ENCODE measurements at regions of chr6 and their contacts with region 1.

Region 1: GRCh38 chr6:52995913-52996645 is 995 bp upstream of the GSTA4 start:
- DNase-seq: peak; percentile 51
- H3K4me3 Mint-ChIP-seq: peak overlapping the region; percentile 89
- H3K27ac Mint-ChIP-seq: peak overlapping the region; percentile 99
- H3K4me1 Mint-ChIP-seq: peaks cover 40% of the 10 kb centered on the region
- H3K27me3 Mint-ChIP-seq: peaks cover 15% of the 10 kb centered on the region

Region 2: GRCh38 chr6:52984247-52984646 is 11.8 kb before region 1 on chr6:
- CTCF ChIA-PET with region 1: interaction called, 42 read pairs
- POLR2A ChIA-PET with region 1: interaction called, 70 read pairs
- DNase-seq: peak; percentile 78
- H3K4me3 Mint-ChIP-seq: peak overlapping the region; percentile 27
- H3K27ac Mint-ChIP-seq: peak overlapping the region; percentile 82
- H3K4me1 Mint-ChIP-seq: peaks cover 45% of the 10 kb centered on the region
- H3K27me3 Mint-ChIP-seq: peaks cover 11% of the 10 kb centered on the region

Region 3: DNA sequence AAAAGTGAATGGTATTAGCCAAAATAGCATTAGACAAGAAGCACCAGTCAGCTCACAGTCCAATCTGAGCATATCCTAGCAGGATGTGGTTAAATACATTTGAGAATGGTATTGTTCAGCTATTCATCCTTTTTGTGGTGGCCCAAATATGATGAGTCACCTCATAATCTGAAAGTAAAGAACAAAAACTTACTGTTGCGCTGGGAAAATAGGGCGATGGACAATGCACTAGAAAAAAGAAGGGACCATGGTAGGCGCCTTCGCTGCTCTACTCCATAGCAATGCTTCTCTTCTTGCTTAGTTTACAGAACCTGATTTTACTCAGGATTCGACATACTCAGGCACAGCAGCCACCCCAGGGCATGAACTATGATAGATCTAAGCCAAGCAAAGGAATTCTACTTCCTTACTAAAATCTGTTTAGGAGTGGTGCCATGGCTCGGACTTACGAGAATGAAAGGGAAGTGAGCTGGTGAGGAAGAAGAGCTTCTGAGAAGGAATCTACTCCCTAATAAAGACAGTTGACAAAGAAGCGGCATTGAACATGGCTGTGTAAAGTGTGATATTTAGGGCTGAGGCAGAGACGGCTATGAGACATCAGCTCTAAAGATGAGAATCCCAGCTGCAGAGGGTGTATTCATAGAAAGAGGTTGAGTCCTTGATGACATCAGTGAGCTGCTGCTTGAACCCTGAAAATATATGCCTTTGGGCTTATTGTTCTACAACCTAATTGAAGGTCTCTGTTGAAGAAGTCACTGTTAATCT is 52.5 kb after region 1 on chr6:
- CTCF ChIA-PET with region 1: interaction called, 27 read pairs
- POLR2A ChIA-PET with region 1: interaction called, 9 read pairs
- DNase-seq: peak; percentile 21
- H3K4me3 Mint-ChIP-seq: peak overlapping the region; percentile 58
- H3K27ac Mint-ChIP-seq: peak overlapping the region; percentile 63
- H3K4me1 Mint-ChIP-seq: peaks cover 26% of the 10 kb centered on the region
- H3K27me3 Mint-ChIP-seq: no peaks in the 10 kb centered on the region

Region 4: DNA sequence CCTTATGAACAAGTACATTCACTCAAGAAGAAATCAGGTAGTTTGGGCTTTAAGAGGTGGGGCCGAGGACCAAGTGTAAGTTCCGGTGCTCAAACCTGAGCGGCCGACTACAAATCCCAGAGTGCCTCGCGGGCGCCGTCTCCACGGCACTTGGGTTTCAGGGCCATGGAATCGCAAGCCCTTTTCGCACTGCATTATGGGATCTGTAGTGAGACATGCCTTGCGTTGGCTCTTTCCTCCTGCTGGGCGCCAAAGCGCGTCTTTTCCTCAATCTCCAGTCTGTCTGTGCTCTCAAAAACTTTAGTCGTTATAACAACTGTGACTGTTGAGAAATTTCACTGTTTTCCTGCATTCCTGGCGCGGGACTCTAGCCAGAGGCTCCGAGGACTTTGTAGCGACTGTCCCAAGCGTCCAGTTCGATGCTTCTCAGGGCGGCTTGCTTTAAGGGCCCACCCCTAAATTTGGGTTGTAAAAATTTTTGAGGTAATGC is 68.7 kb after region 1 on chr6:
- CTCF ChIA-PET with region 1: interaction called, 12 read pairs
- POLR2A ChIA-PET with region 1: interaction called, 19 read pairs
- DNase-seq: peak; percentile 97
- H3K4me3 Mint-ChIP-seq: peak overlapping the region; percentile 99
- H3K27ac Mint-ChIP-seq: peak overlapping the region; percentile 96
- H3K4me1 Mint-ChIP-seq: peaks cover 61% of the 10 kb centered on the region
- H3K27me3 Mint-ChIP-seq: no peaks in the 10 kb centered on the region

Measured in activated CD4-positive, alpha-beta memory T cell treated with anti-CD3 and anti-CD28 coated beads, Interleukin-2, amount 10 ng/mL, durations not matched to agents 7 days and 5 days (primary cell).